Heart right ventricle (tissue), 16 donors: ENCODE measurements at regions of chr13 and their contacts with region 1.

Region 1: GRCh38 chr13:94674609-94675348 is 37.6 kb downstream of the SOX21 start:
- DNase-seq: peak in 1 of 2 donors; percentile 27
- ATAC-seq: no peak
- H3K4me3 ChIP-seq: no peak overlapping the region
- H3K27ac ChIP-seq: no peak overlapping the region
- H3K4me1 ChIP-seq: no peaks in the 10 kb centered on the region
- H3K27me3 ChIP-seq: peaks cover 0 to 35% (median 26%) of the 10 kb centered on the region in 7 donors
- CTCF ChIP-seq: peak; percentile 18 to 77 (median 53)

Region 2: GRCh38 chr13:95156208-95156607 is 481.4 kb after region 1 on chr13:
- intact Hi-C with region 1: loop called in 3 of 10 experiments (anchors 5 to 10 kb)
- DNase-seq: no peak
- ATAC-seq: no peak
- H3K4me3 ChIP-seq: no peak overlapping the region
- H3K27ac ChIP-seq: no peak overlapping the region
- H3K4me1 ChIP-seq: peaks cover 0 to 19% (median 0%) of the 10 kb centered on the region in 9 donors
- H3K27me3 ChIP-seq: no peaks in the 10 kb centered on the region
- CTCF ChIP-seq: peak in 4 of 9 donors; percentile 8 to 43 (median 23)

Region 3: GRCh38 chr13:95403828-95404522 is 729.2 kb after region 1 on chr13:
- intact Hi-C with region 1: loop called in 2 of 10 experiments (anchors 5 to 10 kb)
- DNase-seq: peak; percentile 82 to 83
- ATAC-seq: peak; percentile 88 to 96 (median 92)
- H3K4me3 ChIP-seq: peak overlapping the region in 9 of 10 donors; percentile 17 to 55 (median 45)
- H3K27ac ChIP-seq: no peak overlapping the region
- H3K4me1 ChIP-seq: peaks cover 0 to 9% (median 7%) of the 10 kb centered on the region in 9 donors
- H3K27me3 ChIP-seq: peaks cover 0 to 6% (median 0%) of the 10 kb centered on the region in 7 donors
- CTCF ChIP-seq: peak; percentile 90 to 97 (median 95)